Activated T-helper 2 cell treated with anti-CD3 and anti-CD28 coated beads, Interferon-gamma antibody, Interleukin-2, Interleukin-4, amounts not matched to agents 10 μg/mL and 5 μg/mL and 100 μg/mL, durations not matched to agents 14 hours and 24 hours and 36 hours (primary cell): ENCODE measurements at regions of chr5 and their contacts with region 1.

Region 1: DNA sequence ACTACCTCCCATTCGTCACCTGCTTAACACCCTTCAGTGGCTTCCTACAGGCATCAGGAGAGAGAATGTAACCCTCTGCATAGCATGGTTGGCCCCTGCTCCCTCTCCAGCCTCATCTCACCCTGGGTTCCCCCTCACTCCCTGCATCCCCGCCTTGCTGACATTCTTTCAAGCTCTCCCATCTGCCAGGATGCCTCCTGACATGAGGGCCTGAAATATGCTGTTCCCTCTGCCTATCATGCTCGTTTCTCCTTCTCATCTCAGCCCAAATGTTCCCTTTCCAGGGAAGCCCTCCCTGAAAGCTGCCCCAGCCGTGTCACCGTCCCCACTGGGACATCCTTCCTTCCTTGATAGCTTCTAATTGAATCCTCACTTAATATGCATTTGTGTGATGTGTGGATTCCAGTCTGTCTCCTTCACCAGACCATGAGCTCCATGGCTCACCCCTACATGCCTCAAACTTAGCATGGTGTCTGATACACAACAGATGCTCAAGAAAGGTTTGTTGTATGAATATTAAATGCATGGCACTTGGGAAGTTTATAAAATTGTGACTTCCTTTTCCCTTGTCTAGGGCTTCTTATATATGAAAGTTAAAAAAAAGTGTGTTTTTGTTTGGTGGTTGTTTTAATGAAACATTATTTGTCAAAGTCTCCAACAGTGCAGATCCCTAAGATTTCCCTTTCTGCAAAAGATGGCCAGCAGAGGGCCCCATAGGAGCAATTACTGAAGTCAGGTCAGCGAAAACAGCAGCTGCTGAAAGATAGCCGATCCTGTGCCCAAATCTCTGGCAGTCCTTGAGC is 7.3 kb upstream of the C5orf58 start:
- DNase-seq: peak; percentile 54
- H3K4me3 Mint-ChIP-seq: no peak overlapping the region
- H3K27ac Mint-ChIP-seq: no peak overlapping the region
- H3K4me1 Mint-ChIP-seq: peaks cover 3% of the 10 kb centered on the region
- H3K27me3 Mint-ChIP-seq: no peaks in the 10 kb centered on the region

Region 2: DNA sequence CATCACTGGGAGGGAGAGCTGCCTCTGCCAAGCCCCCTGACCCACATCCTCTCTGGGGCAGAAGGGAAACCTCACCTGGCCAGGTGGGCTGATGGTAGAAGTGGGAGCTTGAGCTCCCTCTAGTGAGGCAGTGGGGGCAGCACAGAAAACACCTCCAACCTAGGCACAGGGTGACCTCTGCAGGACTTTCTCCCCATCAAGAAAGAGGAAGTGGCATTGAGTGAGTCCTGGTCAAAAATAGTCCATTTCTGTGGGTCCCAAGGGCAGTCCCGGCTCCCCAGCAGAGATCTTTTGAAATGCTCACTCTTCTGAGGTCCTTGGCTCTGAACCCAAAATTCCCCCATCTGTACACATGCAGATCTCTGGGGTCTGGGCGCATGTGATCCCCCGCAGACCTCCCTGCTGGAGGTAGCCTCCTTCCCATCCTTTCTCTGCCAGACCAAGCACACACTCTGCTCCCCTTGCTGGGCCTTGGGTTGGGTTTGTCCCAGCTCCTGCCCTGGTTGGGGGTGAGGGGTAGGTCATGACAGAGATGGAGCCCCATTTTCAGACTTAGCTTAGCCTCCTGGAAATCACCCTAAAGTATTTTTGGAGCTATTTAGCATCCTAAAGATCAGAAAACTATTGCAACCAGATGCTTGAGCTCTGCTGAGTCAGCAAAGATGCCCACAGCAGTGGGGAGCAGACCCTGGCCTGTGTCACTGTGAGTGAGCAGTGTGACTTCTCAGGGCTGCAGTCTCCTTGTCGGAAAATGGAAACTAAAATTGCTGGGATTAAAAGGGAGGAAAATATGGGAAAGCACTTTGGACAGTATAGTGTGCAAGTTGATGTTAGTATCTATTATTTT is 113.6 kb after region 1 on chr5:
- intact Hi-C with region 1: loop called (anchors 1 kb)
- DNase-seq: peak; percentile 49
- H3K4me3 Mint-ChIP-seq: no peak overlapping the region
- H3K27ac Mint-ChIP-seq: no peak overlapping the region
- H3K4me1 Mint-ChIP-seq: peaks cover 46% of the 10 kb centered on the region
- H3K27me3 Mint-ChIP-seq: peaks cover 10% of the 10 kb centered on the region

Region 3: GRCh38 chr5:170420780-170421412 is 195.4 kb after region 1 on chr5:
- intact Hi-C with region 1: loop called (anchors 1 kb)
- DNase-seq: peak; percentile 22
- H3K4me3 Mint-ChIP-seq: no peak overlapping the region
- H3K27ac Mint-ChIP-seq: no peak overlapping the region
- H3K4me1 Mint-ChIP-seq: peaks cover 2% of the 10 kb centered on the region
- H3K27me3 Mint-ChIP-seq: peaks cover 35% of the 10 kb centered on the region